T-cell (primary cell): ENCODE measurements at regions of chr13 and their contacts with region 1.

Region 1: GRCh38 chr13:41263261-41264027 is at the start of gene MTRF1:
- DNase-seq: peak; percentile 73 to 90 (median 81)
- ATAC-seq: peak; percentile 93 to 95 (median 95)
- H3K4me3 ChIP-seq: peak within 1 kb of the TSS; percentile 69 to 95
- H3K4me3 Mint-ChIP-seq: peak within 1 kb of the TSS; percentile 90 to 96 (median 92)
- H3K27ac ChIP-seq: peak within 1 kb of the TSS; percentile 83
- H3K27ac Mint-ChIP-seq: peak within 1 kb of the TSS; percentile 96 to 98
- H3K4me1 ChIP-seq: peaks cover 13% of the 10 kb centered on the region in 2 experiments
- H3K4me1 Mint-ChIP-seq: peaks cover 27 to 30% (median 29%) of the 10 kb centered on the region in 3 donors
- H3K27me3 ChIP-seq: no peaks in the 10 kb centered on the region
- H3K27me3 Mint-ChIP-seq: no peaks in the 10 kb centered on the region
- total RNA-seq, gene MTRF1: 22.1 to 35.5 (median 26.6) TPM

Region 2: GRCh38 chr13:40149611-40150274 is 1113.7 kb before region 1 on chr13:
- CTCF ChIA-PET with region 1: no interaction called
- POLR2A ChIA-PET with region 1: interaction called in 1 of 2 experiments, 13 read pairs
- DNase-seq: no peak
- ATAC-seq: no peak
- H3K4me3 ChIP-seq: no peak overlapping the region
- H3K4me3 Mint-ChIP-seq: no peak overlapping the region
- H3K27ac ChIP-seq: no peak overlapping the region
- H3K27ac Mint-ChIP-seq: peak overlapping the region; percentile 57 to 60
- H3K4me1 ChIP-seq: peaks cover 24 to 29% of the 10 kb centered on the region in 2 experiments
- H3K4me1 Mint-ChIP-seq: peaks cover 56 to 67% (median 64%) of the 10 kb centered on the region in 3 donors
- H3K27me3 ChIP-seq: no peaks in the 10 kb centered on the region
- H3K27me3 Mint-ChIP-seq: no peaks in the 10 kb centered on the region

Region 3: DNA sequence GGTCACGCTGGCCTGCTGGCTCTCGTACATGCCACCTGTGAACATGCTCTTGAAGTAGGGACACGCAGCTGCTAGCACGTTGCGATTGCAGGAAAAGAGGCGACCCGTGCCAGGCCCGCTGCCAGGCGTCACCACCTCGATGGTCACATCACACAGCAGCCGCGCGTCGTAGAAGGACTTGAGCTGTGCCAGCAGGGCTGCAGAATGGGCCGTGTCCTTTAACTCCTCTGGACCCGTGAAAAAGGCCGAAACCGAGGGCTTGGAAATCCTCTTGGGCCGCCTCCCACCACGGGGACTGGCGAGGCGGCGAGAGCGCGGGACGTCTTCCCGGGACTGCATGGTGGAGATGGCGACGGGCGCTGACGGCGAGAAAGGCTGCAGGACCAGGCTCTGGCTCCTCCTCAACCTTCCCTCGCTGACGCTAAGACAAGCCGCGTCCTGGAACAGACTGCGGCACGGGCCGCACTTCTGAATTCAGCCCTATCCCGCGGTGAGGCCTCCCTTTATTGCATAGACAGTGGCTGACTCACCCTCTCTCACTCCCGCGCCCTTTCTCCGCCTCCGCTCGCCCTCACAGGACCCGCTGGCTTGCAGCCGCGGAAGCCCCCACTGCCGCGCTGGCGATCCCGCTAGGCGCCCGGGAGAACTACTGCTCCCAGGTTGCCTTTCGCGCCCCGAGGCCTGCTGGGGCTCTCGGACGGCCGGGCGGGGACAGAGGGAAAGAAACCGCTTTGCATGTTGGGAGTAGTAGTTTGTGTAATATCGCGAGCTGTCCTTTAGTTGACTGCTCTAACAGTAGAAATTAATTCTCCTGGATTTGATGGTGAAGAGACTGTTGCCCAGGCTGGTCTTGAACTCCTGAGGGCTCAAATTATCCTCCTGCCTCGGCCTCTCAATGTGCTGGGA is 69.3 kb before region 1 on chr13 and contains the start of gene KBTBD7:
- CTCF ChIA-PET with region 1: no interaction called
- POLR2A ChIA-PET with region 1: interaction called, 3 to 14 read pairs
- DNase-seq: peak; percentile 76 to 91 (median 83)
- ATAC-seq: peak; percentile 98 to 99 (median 98)
- H3K4me3 ChIP-seq: peak within 1 kb of the TSS; percentile 94 to 95
- H3K4me3 Mint-ChIP-seq: peak within 1 kb of the TSS; percentile 87 to 95 (median 92)
- H3K27ac ChIP-seq: peak within 1 kb of the TSS; percentile 76
- H3K27ac Mint-ChIP-seq: peak within 1 kb of the TSS; percentile 89 to 90
- H3K4me1 ChIP-seq: peaks cover 10 to 18% of the 10 kb centered on the region in 2 experiments
- H3K4me1 Mint-ChIP-seq: peaks cover 38 to 47% (median 43%) of the 10 kb centered on the region in 3 donors
- H3K27me3 ChIP-seq: no peaks in the 10 kb centered on the region
- H3K27me3 Mint-ChIP-seq: no peaks in the 10 kb centered on the region
- total RNA-seq, gene KBTBD7: 2.6 to 10.9 (median 9.3) TPM